Esophagus muscularis mucosa (tissue), 4 donors: ENCODE measurements at regions of chr1 and their contacts with region 1.

Region 1: DNA sequence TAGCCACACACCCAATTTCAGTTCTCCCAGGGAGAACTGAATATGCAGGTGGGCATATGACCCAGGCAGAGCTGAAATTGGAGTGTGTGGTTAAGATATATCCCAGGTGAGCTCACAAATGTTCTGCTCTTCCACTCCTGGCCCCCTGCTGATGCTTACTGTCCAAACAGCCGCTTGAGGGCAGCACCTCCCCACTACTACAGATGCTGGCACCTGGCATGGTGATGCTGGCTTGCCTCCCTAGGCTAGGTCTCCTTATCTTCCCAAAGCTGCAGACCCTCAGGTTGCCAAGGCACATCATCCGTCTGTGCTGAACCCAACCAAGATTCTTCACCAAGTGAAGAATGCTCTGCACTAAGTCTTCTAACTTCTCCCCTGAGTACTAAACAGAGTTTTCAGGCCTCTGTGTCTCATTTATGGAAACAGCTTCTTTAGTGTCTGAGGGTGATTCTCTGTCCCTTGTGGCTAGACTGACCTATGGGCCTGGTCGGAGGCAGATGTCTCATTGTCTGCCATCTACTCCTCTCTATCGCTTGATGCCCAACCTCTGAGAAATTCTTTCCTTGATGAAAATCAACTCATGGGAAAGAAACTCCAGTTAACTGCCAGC is 27.2 kb downstream of the XCL1 start:
- DNase-seq: peak; percentile 91
- H3K4me3 ChIP-seq: no peak overlapping the region
- H3K27ac ChIP-seq: no peak overlapping the region
- H3K4me1 ChIP-seq: peaks cover 15 to 46% (median 31%) of the 10 kb centered on the region in 4 donors
- H3K27me3 ChIP-seq: no peaks in the 10 kb centered on the region
- CTCF ChIP-seq: peak; percentile 79 to 88 (median 87)
- EP300 ChIP-seq: no peak
- POLR2A ChIP-seq: no peak

Region 2: DNA sequence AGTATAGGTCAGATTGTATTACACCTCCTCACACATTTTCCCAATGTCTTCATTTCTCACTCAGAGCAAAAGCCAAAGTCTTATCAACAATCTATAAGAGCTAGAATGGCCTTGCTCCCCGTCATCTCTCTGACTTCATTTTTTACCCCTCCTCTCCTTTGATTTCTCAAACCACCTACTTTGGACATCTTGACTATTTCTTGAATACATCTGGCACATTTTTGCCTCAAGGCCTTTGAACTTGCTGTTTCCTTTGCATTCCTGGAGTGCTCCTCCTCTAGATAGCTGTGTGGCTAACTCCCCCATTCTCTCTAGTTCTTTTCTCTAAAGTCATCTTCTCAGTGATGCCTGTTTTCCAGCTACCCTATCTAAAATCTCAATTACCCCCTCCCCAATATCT is 52.6 kb before region 1 on chr1:
- intact Hi-C with region 1: no loop called
- DNase-seq: no peak
- H3K4me3 ChIP-seq: no peak overlapping the region
- H3K27ac ChIP-seq: no peak overlapping the region
- H3K4me1 ChIP-seq: no peaks in the 10 kb centered on the region
- H3K27me3 ChIP-seq: no peaks in the 10 kb centered on the region
- CTCF ChIP-seq: no peak
- EP300 ChIP-seq: no peak
- POLR2A ChIP-seq: no peak

Region 3: GRCh38 chr1:169133801-169134502 is 530.3 kb after region 1 on chr1:
- intact Hi-C with region 1: loop called (anchors 10 kb)
- DNase-seq: no peak
- H3K4me3 ChIP-seq: no peak overlapping the region
- H3K27ac ChIP-seq: peak overlapping the region; percentile 6 to 54 (median 40)
- H3K4me1 ChIP-seq: peaks cover 0 to 46% (median 37%) of the 10 kb centered on the region in 4 donors
- H3K27me3 ChIP-seq: no peaks in the 10 kb centered on the region
- CTCF ChIP-seq: peak; percentile 41 to 55 (median 43)
- EP300 ChIP-seq: no peak
- POLR2A ChIP-seq: no peak

Region 4: DNA sequence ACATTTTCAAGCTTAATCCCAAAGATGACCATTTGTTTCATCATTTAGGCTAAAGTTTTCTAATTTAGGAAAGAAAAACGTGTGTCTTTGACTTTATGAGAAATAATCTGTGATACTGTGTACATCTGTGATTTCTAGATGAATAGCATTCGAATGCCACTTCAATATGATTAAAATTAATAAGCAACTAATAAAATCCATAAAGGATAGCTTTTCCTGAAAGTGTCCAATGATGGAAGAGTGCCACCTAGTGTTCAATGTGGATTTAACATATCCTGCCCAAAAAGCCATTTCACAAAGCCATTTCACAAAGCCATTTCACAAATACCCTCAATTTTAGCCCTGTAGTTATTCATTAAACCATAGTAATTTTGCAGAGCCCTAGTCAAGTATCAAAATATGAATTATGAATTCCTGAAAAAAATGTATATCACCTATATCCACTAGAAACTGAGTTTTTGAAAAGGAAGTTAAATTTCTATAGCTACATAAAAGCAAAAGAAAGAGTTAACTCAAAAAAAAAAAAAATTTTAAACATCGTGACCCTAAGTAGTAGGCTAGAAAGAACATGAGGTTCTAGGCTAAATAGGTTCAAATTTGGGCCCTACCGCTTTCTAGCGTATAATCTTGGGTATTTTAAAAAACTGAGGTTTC is 744.9 kb after region 1 on chr1:
- intact Hi-C with region 1: loop called (anchors 1 kb)
- DNase-seq: no peak
- H3K4me3 ChIP-seq: no peak overlapping the region
- H3K27ac ChIP-seq: no peak overlapping the region
- H3K4me1 ChIP-seq: no peaks in the 10 kb centered on the region
- H3K27me3 ChIP-seq: no peaks in the 10 kb centered on the region
- CTCF ChIP-seq: peak; percentile 73 to 83 (median 78)
- EP300 ChIP-seq: no peak
- POLR2A ChIP-seq: no peak